ENCODE measurements at regions of chr10 and their contacts with region 1.

Region 1: DNA sequence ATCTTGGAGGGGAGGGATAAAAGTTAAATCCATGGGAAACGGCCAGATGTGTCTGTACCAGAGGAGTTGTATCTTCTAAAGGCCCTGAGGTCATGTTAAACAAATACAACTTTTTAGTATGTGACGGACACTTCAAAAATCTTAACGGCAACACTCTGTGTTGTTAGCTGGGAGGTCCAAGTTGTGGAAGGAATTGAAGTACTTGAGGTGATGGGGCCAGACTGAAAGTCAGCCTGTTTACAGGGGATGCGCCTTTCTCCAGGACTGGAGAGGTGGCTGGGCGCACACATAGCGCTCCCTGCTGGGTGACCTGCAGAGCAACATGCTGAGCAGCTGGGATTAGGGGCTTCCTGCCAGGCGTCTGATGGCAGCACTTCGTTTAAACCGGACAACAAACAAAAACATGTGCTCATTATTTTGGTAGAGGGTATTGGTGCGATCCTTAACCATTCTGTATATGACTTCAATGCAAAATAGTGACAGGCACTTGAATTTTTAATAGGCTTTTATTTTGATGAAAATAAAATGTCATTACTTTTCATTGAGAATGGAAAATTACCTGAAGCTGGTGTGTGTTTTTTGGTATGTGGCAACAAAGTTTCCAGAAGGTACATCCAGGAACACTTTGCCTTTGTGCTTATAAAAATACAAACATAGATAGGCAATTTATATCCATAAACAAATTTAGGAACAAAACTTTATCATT is 198.2 kb downstream of the MLLT10 start:
- DNase-seq: peak; percentile 73 to 83 (median 80)
- H3K4me3 ChIP-seq: no peak overlapping the region
- H3K27ac ChIP-seq: no peak overlapping the region
- H3K4me1 ChIP-seq: no peaks in the 10 kb centered on the region
- H3K27me3 ChIP-seq: no peaks in the 10 kb centered on the region
- CTCF ChIP-seq: peak; percentile 59 to 84 (median 82)
- EP300 ChIP-seq: no peak
- POLR2A ChIP-seq: no peak

Region 2: GRCh38 chr10:20173046-20173445 is 1559.2 kb before region 1 on chr10:
- intact Hi-C with region 1: no loop called
- DNase-seq: no peak
- H3K4me3 ChIP-seq: no peak overlapping the region
- H3K27ac ChIP-seq: no peak overlapping the region
- H3K4me1 ChIP-seq: no peaks in the 10 kb centered on the region
- H3K27me3 ChIP-seq: no peaks in the 10 kb centered on the region
- CTCF ChIP-seq: no peak
- EP300 ChIP-seq: no peak
- POLR2A ChIP-seq: no peak

Region 3: DNA sequence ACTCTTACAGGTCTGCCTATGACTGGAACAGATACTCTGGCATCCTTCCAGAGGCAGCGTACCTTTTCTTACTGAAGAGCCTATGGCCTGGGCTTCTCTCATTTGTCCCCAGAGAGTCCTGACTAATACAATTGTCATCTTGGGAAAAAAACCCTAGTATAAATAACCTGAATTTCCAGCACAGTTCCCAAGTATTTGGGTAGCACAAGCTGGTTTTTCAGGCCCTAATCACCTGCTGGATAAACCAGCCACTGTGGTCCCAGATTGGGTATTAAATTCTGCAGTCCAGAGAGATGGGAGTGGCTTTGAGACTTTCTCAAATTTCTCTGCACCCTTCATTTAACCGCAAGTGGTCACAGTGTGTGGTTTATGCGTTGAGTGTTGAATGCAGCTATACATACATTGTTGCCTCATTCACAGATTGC is 648.3 kb before region 1 on chr10:
- intact Hi-C with region 1: loop called in 1 of 4 experiments (anchors 5 kb)
- DNase-seq: no peak
- H3K4me3 ChIP-seq: no peak overlapping the region
- H3K27ac ChIP-seq: no peak overlapping the region
- H3K4me1 ChIP-seq: no peaks in the 10 kb centered on the region
- H3K27me3 ChIP-seq: no peaks in the 10 kb centered on the region
- CTCF ChIP-seq: no peak
- EP300 ChIP-seq: no peak
- POLR2A ChIP-seq: no peak

Region 4: DNA sequence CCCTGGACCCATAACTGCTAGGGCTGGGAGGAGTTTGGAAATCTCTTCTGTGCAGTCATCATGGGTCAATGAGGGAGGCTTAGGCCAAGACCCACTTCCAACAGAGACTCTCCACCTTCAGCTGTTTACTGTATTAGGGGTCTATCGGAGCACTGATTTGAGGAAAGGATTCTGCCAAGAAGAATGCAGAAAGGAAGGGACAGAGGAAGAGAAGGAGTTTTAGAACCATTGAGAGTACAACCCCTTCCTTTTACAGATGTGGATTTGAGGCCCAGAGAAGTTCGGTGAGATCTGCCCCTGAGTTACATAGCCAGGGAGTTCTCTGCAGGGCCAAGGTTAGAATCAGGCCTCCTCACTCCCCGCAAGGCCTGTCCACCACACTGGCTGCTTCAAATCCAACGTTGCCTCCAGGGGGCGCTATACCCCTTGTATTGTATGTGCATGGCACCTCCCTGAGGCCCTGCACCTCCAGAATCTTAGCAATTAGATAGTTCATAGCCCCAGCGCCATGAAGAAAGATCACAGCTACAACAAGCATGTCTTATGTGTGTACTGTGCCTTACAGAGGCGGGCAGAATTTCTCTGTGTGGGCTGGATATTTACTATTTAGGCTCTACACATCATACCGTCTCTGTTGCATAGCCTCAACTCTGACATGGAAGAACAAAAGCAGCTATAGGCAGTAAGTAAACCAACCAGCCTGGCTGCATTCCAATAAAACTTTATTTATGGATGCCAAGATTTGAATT is 453.6 kb before region 1 on chr10:
- intact Hi-C with region 1: loop called in 1 of 4 experiments (anchors 5 kb)
- DNase-seq: peak; percentile 94 to 97 (median 95)
- H3K4me3 ChIP-seq: no peak overlapping the region
- H3K27ac ChIP-seq: no peak overlapping the region
- H3K4me1 ChIP-seq: peaks cover 4% of the 10 kb centered on the region
- H3K27me3 ChIP-seq: no peaks in the 10 kb centered on the region
- CTCF ChIP-seq: peak; percentile 64 to 82 (median 65)
- EP300 ChIP-seq: no peak
- POLR2A ChIP-seq: no peak

Region 5: GRCh38 chr10:21372651-21373410 is 359.4 kb before region 1 on chr10:
- intact Hi-C with region 1: no loop called
- DNase-seq: peak; percentile 57 to 66 (median 63)
- H3K4me3 ChIP-seq: no peak overlapping the region
- H3K27ac ChIP-seq: peak overlapping the region in 1 of 2 donors; percentile 8
- H3K4me1 ChIP-seq: peaks cover 3% of the 10 kb centered on the region
- H3K27me3 ChIP-seq: no peaks in the 10 kb centered on the region
- CTCF ChIP-seq: no peak
- EP300 ChIP-seq: no peak
- POLR2A ChIP-seq: no peak

Region 6: GRCh38 chr10:21385996-21386610 is 346.1 kb before region 1 on chr10:
- intact Hi-C with region 1: no loop called
- DNase-seq: no peak
- H3K4me3 ChIP-seq: no peak overlapping the region
- H3K27ac ChIP-seq: no peak overlapping the region
- H3K4me1 ChIP-seq: no peaks in the 10 kb centered on the region
- H3K27me3 ChIP-seq: no peaks in the 10 kb centered on the region
- CTCF ChIP-seq: no peak
- EP300 ChIP-seq: no peak
- POLR2A ChIP-seq: no peak